ENCODE measurements at regions of chr20 and their contacts with region 1.

Region 1: DNA sequence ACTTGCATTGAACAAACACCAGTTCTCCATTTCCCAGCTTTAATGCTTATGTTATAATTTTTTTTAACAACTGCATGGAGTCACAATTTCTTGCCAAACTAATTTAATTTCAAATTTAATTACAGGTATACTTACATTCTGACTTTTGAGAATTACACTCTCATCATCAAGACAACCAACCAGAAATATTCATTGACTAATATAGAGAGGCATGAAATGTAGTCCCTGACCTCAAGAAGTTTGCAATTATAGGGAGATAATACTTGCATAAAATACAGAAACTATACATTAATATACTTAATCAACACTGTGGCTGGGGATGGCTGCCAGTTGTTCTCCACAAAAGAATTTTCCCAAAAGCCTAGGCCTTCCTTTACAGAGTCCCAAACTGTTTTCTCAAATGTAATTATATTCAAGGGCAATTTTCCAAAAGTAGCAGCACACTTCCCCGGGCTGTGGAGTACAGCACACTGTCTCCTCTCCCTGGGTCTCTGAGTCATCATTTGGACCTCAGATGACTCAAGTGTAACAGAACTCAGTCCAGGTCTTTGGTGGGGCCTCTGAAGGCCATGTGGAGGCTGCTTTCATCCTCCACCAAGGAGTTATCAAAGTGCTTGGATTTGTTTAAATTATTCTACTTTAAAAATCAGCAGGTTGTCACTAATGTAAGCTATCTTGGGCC is 114.1 kb downstream of the KIF16B start:
- DNase-seq: no peak
- CTCF ChIP-seq: no peak

Region 2: DNA sequence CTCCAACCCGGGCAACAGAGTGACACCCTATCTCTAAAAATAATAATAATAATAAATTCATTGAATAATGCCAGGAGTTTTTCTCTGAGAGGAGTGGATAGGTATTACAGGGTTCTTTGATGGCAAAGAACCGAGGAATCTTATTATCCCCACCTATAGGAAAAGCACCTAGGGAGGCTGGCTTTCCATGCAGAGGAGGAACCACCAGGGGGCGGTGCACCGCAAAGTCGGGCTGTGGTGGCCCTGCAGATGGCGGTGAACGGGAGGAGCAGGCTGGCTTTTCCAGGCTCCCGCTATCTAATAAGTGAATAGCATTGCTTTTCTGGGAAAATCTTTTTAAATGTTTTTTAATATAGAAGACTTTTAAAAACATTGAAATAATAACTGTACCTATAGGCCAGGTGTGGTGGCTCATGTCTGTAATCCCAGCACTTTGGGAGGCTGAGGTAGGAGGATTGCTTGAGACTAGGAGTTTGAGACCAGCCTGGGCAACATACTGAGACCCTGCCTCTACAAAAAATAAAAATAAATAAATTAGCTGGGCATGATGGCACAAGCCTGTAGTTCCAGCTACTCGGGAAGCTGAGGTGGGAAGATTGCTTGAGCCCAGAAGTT is 750.1 kb before region 1 on chr20:
- in situ Hi-C with region 1: loop called (anchors 25 kb)
- DNase-seq: peak; percentile 35
- CTCF ChIP-seq: peak; percentile 87